ENCODE measurements at regions of chr9 and their contacts with region 1.

Region 1: GRCh38 chr9:130732131-130732530 is 38.6 kb downstream of the EXOSC2 start:
- DNase-seq: peak; percentile 32
- H3K4me3 ChIP-seq: no peak overlapping the region
- H3K27ac ChIP-seq: no peak overlapping the region
- H3K4me1 ChIP-seq: peaks cover 30% of the 10 kb centered on the region
- H3K27me3 ChIP-seq: no peaks in the 10 kb centered on the region
- CTCF ChIP-seq: peak in 1 of 2 donors; percentile 23
- POLR2A ChIP-seq: no peak

Region 2: GRCh38 chr9:130756037-130756436 is 23.9 kb after region 1 on chr9:
- CTCF ChIA-PET with region 1: interaction called, 10 read pairs
- POLR2A ChIA-PET with region 1: no interaction called
- dilution Hi-C with region 1: no loop called
- intact Hi-C with region 1: no loop called
- DNase-seq: peak; percentile 79
- H3K4me3 ChIP-seq: no peak overlapping the region
- H3K27ac ChIP-seq: peak overlapping the region; percentile 44
- H3K4me1 ChIP-seq: peaks cover 25% of the 10 kb centered on the region
- H3K27me3 ChIP-seq: no peaks in the 10 kb centered on the region
- CTCF ChIP-seq: no peak
- POLR2A ChIP-seq: no peak

Region 3: DNA sequence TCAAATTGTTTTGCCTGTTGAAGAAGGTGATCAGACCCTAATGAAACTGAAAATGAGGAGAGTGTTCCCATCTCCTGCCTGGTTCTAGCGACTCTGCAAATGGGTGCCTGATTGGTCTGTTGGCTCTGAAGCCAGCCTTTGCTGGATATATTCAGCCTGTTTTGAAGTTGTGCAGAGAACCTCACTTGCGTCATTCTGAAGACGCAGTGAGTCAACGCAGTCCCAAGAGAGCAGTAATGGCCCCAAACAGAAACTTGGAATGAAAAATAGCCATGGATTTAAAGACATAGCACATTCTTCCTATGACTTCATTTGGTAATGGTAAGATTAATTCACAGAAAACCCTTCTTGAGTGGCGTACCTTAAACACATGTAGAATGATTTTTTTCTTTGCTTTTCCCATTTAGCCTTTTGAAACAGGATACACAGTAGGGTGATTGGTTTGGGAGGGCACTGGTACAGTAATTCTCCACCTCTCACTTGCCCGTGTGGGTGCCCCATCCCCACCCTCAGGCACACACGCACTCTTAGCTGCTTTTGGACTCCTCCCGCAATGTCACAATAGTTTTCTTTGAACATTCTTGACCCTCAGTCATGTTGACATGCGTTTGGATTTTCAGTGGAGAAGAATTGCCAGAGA is 48.9 kb after region 1 on chr9:
- CTCF ChIA-PET with region 1: no interaction called
- POLR2A ChIA-PET with region 1: no interaction called
- dilution Hi-C with region 1: no loop called
- intact Hi-C with region 1: no loop called
- DNase-seq: no peak
- H3K4me3 ChIP-seq: no peak overlapping the region
- H3K27ac ChIP-seq: no peak overlapping the region
- H3K4me1 ChIP-seq: peaks cover 5% of the 10 kb centered on the region
- H3K27me3 ChIP-seq: no peaks in the 10 kb centered on the region
- CTCF ChIP-seq: no peak
- POLR2A ChIP-seq: no peak

Region 4: GRCh38 chr9:130834371-130835311 is 102.5 kb after region 1 on chr9 and contains the start of gene ABL1:
- CTCF ChIA-PET with region 1: no interaction called
- POLR2A ChIA-PET with region 1: interaction called, 15 read pairs
- dilution Hi-C with region 1: no loop called
- intact Hi-C with region 1: no loop called
- DNase-seq: peak; percentile 88
- H3K4me3 ChIP-seq: peak within 1 kb of the TSS; percentile 85 to 92 (median 89)
- H3K27ac ChIP-seq: peak within 1 kb of the TSS; percentile 85
- H3K4me1 ChIP-seq: peaks cover 47% of the 10 kb centered on the region
- H3K27me3 ChIP-seq: no peaks in the 10 kb centered on the region
- CTCF ChIP-seq: no peak
- POLR2A ChIP-seq: peak; percentile 60
- total RNA-seq, gene ABL1: 79.2 and 87.1 TPM in 2 replicates

Region 5: DNA sequence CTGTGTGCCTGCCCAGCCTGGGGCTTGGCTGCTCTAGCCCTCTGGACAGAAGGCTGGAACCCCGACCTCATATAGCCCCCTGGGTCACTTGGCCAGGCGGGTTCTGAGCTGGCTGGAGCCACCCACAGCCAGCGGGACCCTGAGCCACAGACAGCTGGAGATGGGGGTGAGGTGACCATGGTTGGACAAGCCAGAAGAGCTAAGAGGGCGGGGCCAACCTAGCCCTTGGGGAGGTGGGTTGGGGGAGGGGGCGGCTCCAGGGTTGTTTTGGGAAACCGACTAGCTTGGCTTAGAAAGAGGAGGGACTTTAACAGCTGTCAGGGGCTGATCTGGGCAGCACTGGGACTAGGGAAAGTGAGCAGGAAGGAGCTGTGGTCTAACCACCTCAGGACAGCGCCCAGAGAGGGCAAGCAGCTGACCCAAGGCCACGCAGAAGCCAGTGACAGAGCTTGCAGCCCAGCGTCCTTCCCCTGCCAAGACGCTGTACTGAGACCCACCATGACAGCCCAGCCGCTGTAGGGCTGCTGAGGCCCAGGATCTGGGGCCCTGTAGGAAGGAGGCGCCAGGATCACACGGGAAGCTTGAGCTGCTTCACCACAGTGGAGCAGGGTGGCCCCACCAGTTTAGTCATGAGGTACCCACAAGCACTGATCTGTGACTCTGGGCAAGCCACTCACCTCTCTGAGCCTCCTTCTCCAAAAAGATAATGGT is 366.4 kb after region 1 on chr9:
- CTCF ChIA-PET with region 1: no interaction called
- POLR2A ChIA-PET with region 1: no interaction called
- dilution Hi-C with region 1: no loop called
- intact Hi-C with region 1: no loop called
- DNase-seq: no peak
- H3K4me3 ChIP-seq: no peak overlapping the region
- H3K27ac ChIP-seq: no peak overlapping the region
- H3K4me1 ChIP-seq: peaks cover 7% of the 10 kb centered on the region
- H3K27me3 ChIP-seq: peaks cover 8 to 14% of the 10 kb centered on the region in 2 experiments
- CTCF ChIP-seq: no peak
- POLR2A ChIP-seq: no peak

Measured in endothelial cell of umbilical vein (primary cell).